ENCODE measurements at regions of chr5 and their contacts with region 1.

Region 1: GRCh38 chr5:135977375-135977928 is 22.7 kb upstream of the LECT2 start:
- DNase-seq: peak; percentile 50
- CTCF ChIP-seq: peak; percentile 79

Region 2: DNA sequence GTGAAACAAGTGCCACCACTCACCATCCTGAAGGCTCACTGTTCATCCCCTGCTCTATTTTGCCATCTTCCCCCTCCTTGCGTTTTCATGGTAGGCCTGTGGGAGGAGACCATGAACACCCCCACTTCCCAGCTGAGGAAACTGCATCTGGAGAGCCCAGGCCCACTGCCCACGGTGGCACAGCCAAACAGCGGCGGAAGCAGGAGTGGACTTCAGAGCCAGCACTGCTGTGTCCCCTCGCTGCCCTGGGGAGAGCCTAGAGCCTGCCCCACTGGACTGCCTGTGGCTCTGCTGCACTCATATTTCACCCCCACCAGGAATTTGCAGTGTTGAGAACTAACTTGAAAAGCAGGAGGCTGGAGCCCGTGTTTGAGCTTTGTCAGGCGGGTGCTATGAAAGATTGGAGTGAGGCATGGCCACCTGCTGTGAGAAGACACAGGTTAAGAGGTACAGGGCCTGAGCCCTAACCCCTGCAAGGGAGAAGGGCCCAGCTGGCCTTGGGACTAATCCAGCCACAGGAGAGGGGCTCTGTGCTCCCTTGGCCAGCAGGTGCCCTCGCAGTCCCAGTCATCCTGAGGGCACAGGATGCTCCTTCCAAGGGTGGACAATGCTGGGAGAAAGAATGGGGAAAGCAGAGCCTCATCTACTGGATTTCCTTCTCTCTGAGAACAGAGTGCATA is 657.4 kb before region 1 on chr5:
- CTCF ChIA-PET with region 1: no interaction called
- POLR2A ChIA-PET with region 1: no interaction called
- DNase-seq: no peak
- CTCF ChIP-seq: no peak

Region 3: GRCh38 chr5:135964670-135965320 is 12.7 kb before region 1 on chr5:
- CTCF ChIA-PET with region 1: interaction called, 22 read pairs
- POLR2A ChIA-PET with region 1: no interaction called
- DNase-seq: no peak
- CTCF ChIP-seq: no peak

Region 4: DNA sequence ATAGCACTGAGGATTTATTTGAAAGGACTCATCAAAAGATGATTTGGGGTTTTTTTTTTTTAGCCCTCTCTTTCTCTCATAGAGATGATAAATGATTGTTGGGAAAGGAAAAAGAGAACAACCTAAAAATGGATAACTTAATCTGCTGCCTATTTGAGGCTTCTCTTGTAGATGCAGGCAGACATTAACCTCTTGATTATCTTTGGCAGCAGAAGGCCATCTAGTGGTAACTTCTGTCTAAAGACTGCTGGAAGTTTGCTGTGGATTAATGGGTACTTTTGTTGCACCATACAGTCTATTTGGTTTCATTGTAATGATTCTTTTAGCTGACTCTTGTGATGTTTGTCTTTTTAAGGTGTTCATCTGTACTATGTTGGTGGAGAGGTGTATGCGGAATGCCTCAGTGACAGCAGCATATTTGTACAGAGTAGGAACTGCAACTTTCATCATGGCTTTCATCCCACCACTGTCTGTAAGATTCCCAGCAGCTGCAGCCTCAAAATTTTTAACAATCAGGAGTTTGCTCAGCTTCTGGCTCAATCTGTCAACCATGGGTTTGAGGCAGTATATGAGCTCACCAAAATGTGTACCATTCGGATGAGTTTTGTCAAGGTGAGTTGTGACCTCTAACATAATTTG is 196.7 kb after region 1 on chr5:
- CTCF ChIA-PET with region 1: interaction called, 10 read pairs
- POLR2A ChIA-PET with region 1: no interaction called
- DNase-seq: peak; percentile 43
- CTCF ChIP-seq: peak; percentile 63

Measured in GM10248 (cell line).